ENCODE measurements at regions of chr10 and their contacts with region 1.

Region 1: GRCh38 chr10:71893920-71894319 is 42.9 kb upstream of the PSAP start:
- DNase-seq: no peak
- H3K4me3 ChIP-seq: no peak overlapping the region
- H3K27ac ChIP-seq: no peak overlapping the region
- H3K4me1 ChIP-seq: peaks cover 5% of the 10 kb centered on the region
- H3K27me3 ChIP-seq: no peaks in the 10 kb centered on the region
- CTCF ChIP-seq: no peak
- POLR2A ChIP-seq: no peak

Region 2: GRCh38 chr10:71212318-71213126 is 681.4 kb before region 1 on chr10 and contains the start of gene UNC5B:
- CTCF ChIA-PET with region 1: no interaction called
- POLR2A ChIA-PET with region 1: no interaction called
- dilution Hi-C with region 1: no loop called
- intact Hi-C with region 1: no loop called
- DNase-seq: peak; percentile 80
- H3K4me3 ChIP-seq: peak within 1 kb of the TSS; percentile 11 to 36 (median 33)
- H3K27ac ChIP-seq: no peak within 1 kb of the TSS
- H3K4me1 ChIP-seq: peaks cover 21% of the 10 kb centered on the region
- H3K27me3 ChIP-seq: peaks cover 46 to 63% of the 10 kb centered on the region in 2 experiments
- CTCF ChIP-seq: peak in 1 of 2 donors; percentile 19
- POLR2A ChIP-seq: no peak
- total RNA-seq, gene UNC5B: 2.5 and 5.4 TPM in 2 replicates

Region 3: DNA sequence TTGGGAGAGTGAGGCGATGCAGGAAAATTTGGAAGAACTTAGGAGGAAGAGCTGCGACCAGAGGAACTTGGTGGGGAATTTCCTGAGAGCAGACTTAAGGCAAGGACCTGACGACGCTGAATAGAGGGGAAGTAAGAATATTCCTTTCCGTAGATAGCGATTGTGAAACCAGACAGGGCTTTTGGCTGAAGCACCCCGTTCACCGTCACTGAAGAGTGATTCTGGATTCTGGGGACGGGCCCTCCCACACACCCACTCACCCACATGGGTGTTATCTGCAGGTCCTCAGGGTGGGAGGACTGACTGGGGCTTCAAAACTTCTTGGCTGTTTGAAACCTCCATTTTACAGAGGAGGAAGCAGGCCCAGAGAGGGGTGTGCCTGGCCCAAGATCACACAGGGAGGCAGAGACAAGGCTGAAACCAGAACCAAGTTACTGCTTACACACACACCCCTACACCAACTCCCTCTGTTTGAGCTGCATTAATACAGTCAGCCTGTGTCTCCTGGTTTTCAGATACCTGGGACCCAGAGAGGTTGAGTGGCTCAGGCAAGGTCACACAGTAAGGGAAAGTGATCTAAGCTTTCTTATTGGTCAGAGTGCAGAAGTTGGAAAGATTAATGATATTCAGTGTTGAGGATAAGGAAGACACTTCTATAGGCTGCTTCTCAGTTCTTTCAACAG is 534.4 kb before region 1 on chr10:
- CTCF ChIA-PET with region 1: no interaction called
- POLR2A ChIA-PET with region 1: no interaction called
- dilution Hi-C with region 1: no loop called
- intact Hi-C with region 1: no loop called
- DNase-seq: no peak
- H3K4me3 ChIP-seq: no peak overlapping the region
- H3K27ac ChIP-seq: no peak overlapping the region
- H3K4me1 ChIP-seq: peaks cover 15% of the 10 kb centered on the region
- H3K27me3 ChIP-seq: no peaks in the 10 kb centered on the region
- CTCF ChIP-seq: no peak
- POLR2A ChIP-seq: no peak

Region 4: DNA sequence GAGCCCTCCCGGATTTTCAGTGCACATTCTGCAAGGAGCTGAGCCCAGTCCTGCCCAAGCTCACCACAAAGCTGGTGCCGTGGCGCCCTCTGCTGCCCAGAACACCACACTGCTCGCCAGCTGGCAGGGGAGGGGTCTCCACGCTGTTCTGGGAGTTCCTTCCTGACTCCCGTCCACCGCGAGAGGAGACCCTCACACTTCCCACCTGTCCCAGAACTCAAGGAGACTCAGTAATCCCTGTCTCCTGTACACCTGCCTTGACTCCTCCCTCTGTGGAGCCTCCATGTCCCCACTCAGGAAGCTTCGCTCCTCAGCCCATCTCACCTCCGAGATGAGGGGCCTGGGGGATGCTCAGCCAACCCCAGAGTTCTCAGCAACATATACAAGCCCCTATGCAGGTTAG is 185.6 kb before region 1 on chr10:
- CTCF ChIA-PET with region 1: interaction called, 12 read pairs
- POLR2A ChIA-PET with region 1: no interaction called
- dilution Hi-C with region 1: no loop called
- intact Hi-C with region 1: no loop called
- DNase-seq: peak; percentile 54
- H3K4me3 ChIP-seq: no peak overlapping the region
- H3K27ac ChIP-seq: no peak overlapping the region
- H3K4me1 ChIP-seq: no peaks in the 10 kb centered on the region
- H3K27me3 ChIP-seq: peaks cover 0 to 3% of the 10 kb centered on the region in 2 experiments
- CTCF ChIP-seq: peak; percentile 84 to 94
- POLR2A ChIP-seq: no peak

Region 5: DNA sequence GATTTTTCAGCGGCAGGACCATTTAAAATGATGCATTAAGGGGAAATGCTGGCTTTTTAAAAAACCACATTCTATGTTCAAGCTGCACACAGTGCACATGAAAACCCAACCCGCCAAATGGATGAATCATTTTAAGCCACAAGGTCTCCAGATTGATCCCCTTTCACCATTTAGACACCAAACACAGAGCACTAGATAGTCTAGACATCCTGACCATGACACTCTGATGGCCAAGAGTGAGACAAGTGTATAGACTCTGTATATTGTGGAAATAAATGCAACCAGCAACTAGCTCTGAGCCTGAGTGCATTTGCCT is 71.5 kb before region 1 on chr10:
- CTCF ChIA-PET with region 1: interaction called, 48 read pairs
- POLR2A ChIA-PET with region 1: no interaction called
- dilution Hi-C with region 1: no loop called
- intact Hi-C with region 1: no loop called
- DNase-seq: no peak
- H3K4me3 ChIP-seq: no peak overlapping the region
- H3K27ac ChIP-seq: no peak overlapping the region
- H3K4me1 ChIP-seq: no peaks in the 10 kb centered on the region
- H3K27me3 ChIP-seq: no peaks in the 10 kb centered on the region
- CTCF ChIP-seq: no peak
- POLR2A ChIP-seq: no peak

Region 6: DNA sequence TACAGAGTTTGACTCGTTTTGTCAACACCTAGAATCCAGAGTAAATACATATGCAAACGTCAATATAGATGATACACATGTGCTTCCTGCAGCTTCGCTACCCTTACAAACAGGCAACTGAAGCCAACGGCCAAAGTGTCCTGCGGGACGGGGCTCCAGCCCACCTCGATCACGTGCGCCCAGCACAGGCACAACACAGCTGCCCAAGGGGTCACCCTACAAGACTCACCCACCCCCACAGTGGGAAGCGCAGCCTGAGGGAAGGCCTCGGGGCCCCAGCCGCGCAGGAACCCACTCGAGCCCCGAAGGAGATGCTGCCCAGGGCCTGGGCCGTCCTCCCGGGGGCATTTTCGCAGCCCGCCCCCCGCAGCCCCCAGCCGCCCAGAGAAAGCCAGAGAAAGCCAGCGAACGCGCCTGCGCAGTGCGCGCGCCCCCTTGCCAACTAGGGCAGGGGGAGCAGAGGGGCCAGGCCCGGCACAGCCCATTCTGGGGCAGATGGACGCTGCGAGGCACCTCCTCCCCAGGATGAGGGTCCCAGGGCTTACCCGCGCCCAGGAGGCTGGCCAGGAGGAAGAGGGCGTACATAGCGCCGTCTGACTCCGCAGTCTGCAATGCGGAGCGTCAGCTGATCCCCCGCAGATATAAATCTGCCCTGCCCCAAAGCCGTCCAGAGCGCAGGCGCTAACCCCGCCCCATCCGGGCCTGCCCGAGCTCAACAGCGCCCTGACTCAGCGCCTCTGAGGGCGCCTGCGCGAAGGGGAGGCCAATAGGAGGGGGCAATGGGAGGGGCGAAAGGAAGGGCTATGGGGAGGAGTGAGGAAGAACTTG is 43.1 kb before region 1 on chr10 and contains the start of gene PSAP:
- CTCF ChIA-PET with region 1: interaction called, 35 read pairs
- POLR2A ChIA-PET with region 1: interaction called, 5 read pairs
- dilution Hi-C with region 1: no loop called
- intact Hi-C with region 1: loop called (anchors 1 kb)
- DNase-seq: peak; percentile 99
- H3K4me3 ChIP-seq: peak within 1 kb of the TSS; percentile 76 to 92 (median 85)
- H3K27ac ChIP-seq: peak within 1 kb of the TSS; percentile 85
- H3K4me1 ChIP-seq: peaks cover 17% of the 10 kb centered on the region
- H3K27me3 ChIP-seq: no peaks in the 10 kb centered on the region
- CTCF ChIP-seq: no peak
- POLR2A ChIP-seq: peak; percentile 98
- total RNA-seq, gene PSAP: 623 and 644 TPM in 2 replicates

Region 7: GRCh38 chr10:71909399-71910083 is 15.6 kb after region 1 on chr10:
- CTCF ChIA-PET with region 1: interaction called, 14 read pairs
- POLR2A ChIA-PET with region 1: no interaction called
- dilution Hi-C with region 1: no loop called
- intact Hi-C with region 1: no loop called
- DNase-seq: no peak
- H3K4me3 ChIP-seq: no peak overlapping the region
- H3K27ac ChIP-seq: no peak overlapping the region
- H3K4me1 ChIP-seq: no peaks in the 10 kb centered on the region
- H3K27me3 ChIP-seq: no peaks in the 10 kb centered on the region
- CTCF ChIP-seq: no peak
- POLR2A ChIP-seq: no peak

Region 8: DNA sequence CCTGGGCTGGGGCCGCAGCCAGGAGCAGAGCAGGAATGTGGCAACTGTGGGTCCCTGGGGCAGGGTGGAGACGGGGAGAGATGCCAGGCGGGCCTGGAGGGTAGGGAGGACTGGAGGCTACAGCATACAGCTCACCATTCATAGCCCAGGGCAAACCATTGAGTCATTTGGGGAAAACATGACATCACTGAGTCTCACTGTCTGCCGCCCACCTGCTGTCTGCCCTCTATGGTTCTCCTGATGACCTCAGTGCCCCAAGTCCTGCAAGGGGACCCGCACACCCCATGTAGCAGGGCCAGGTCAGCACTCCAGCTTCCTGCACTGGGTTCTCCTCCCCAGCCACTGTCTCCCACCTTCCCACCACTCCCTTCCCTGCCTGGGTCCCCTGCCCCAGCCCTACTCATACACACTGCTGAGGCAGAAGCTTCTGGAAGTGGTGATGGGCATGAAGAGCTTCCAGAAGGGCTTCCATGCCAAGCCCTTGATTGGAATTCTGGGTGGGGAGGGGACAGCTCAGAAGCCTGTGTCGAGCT is 80.6 kb after region 1 on chr10:
- CTCF ChIA-PET with region 1: interaction called, 32 read pairs
- POLR2A ChIA-PET with region 1: no interaction called
- dilution Hi-C with region 1: no loop called
- intact Hi-C with region 1: loop called (anchors 1 kb)
- DNase-seq: peak; percentile 45
- H3K4me3 ChIP-seq: no peak overlapping the region
- H3K27ac ChIP-seq: peak overlapping the region; percentile 16
- H3K4me1 ChIP-seq: peaks cover 44% of the 10 kb centered on the region
- H3K27me3 ChIP-seq: no peaks in the 10 kb centered on the region
- CTCF ChIP-seq: no peak
- POLR2A ChIP-seq: no peak

Region 9: GRCh38 chr10:72126184-72126871 is 232.4 kb after region 1 on chr10:
- CTCF ChIA-PET with region 1: interaction called, 15 read pairs
- POLR2A ChIA-PET with region 1: no interaction called
- dilution Hi-C with region 1: no loop called
- intact Hi-C with region 1: no loop called
- DNase-seq: peak; percentile 65
- H3K4me3 ChIP-seq: no peak overlapping the region
- H3K27ac ChIP-seq: no peak overlapping the region
- H3K4me1 ChIP-seq: no peaks in the 10 kb centered on the region
- H3K27me3 ChIP-seq: no peaks in the 10 kb centered on the region
- CTCF ChIP-seq: peak; percentile 39
- POLR2A ChIP-seq: no peak

Region 10: DNA sequence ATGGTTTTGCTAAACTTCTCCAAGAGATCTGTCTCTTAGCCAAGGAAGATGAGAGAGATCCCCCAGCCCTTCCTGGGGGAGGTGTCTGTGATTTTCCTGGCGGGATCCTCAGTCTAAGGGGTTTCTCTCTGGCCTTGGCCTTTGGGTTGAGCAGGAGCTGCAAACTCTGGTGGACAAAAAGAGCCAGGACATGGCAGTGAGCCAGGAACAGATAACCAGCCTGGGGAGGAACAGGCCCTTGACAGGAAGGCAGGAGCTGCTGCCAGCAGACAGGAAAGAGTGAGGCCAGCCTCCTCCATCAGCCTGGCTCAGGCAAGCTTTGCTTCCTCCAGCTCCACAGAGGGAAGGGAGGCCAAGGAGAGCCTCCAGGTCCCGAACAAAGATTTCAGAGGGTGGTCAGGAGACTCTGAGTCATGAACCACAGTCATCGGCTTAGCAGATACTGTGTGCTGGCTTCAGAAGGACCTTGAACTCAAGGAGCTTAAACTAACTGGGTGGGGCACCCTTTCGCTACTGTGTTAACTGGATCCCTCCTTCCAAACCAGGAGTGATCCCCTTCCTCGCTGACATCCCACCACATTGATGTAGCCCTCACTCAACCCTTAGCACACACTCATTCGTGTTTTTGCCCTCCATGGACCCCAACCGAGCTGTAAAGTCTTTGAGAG is 414.5 kb after region 1 on chr10:
- CTCF ChIA-PET with region 1: no interaction called
- POLR2A ChIA-PET with region 1: no interaction called
- dilution Hi-C with region 1: no loop called
- intact Hi-C with region 1: no loop called
- DNase-seq: peak; percentile 74
- H3K4me3 ChIP-seq: no peak overlapping the region
- H3K27ac ChIP-seq: peak overlapping the region; percentile 47
- H3K4me1 ChIP-seq: peaks cover 28% of the 10 kb centered on the region
- H3K27me3 ChIP-seq: no peaks in the 10 kb centered on the region
- CTCF ChIP-seq: no peak
- POLR2A ChIP-seq: no peak